Activated naive CD4-positive, alpha-beta T cell treated with anti-CD3 and anti-CD28 coated beads for 36 hours (primary cell): ENCODE measurements at regions of chr11 and their contacts with region 1.

Region 1: DNA sequence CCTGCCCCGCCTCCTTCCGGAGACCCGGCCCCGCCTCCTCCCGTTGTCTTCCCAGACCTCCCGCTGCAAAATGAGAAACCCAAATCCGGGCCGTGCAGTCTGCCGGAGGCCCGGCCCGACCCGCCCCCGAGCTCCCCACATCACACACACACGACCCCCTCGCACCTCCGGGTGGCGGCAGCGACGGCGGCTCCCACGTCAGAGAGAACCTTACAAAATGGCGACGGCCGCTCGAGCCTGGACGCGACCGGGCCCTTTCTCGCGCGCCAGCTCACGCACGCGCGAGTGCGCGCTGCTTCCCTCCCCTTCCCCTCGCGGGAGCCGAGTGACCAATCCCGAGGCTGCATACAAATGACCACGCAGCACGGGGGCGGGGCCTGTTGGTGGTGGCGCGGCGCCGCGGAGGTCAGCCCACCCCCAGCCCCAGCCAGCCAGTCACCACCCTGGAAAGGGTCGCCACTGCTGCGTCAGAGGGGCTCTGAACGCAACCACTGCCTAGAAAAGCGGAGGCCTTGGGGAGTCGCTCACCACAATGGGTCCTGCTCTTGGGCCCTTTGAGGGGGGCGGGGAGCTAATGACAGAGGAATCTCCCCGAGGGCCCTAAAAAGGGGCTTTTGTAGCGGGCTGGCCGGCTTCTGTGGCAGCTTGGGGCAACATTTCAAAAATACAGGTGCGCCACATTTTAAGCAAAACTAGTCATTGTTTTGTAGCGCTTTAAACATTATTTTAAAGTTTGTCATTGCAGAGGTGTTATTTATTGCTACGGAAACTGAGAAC is at the start of gene RBM4B:
- DNase-seq: peak; percentile 97
- H3K4me3 Mint-ChIP-seq: peak within 1 kb of the TSS; percentile 96
- H3K27ac Mint-ChIP-seq: peak within 1 kb of the TSS; percentile 97
- H3K4me1 Mint-ChIP-seq: peaks cover 27% of the 10 kb centered on the region
- H3K27me3 Mint-ChIP-seq: no peaks in the 10 kb centered on the region
- total RNA-seq, gene RBM4B: 10.9 to 11.7 TPM

Region 2: DNA sequence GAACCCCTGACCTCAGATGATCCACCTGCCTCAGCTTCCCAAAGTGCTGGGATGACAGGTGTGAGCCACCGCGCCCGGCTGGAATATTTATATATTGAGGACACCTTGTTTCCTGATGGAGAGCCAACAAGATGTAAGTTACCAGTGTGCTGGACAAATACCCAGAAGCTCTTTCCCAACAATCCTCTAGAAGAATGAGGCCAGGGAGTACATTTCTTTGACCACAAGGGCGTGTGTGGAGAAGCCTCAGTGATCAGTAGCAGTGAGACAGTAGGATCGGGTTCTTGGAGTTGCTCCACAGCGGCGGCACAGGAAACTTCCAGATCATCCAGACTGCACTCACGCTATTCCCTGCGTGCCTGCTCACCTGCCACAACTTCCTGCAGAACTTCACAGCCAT is 1426.3 kb before region 1 on chr11:
- CTCF ChIA-PET with region 1: no interaction called
- intact Hi-C with region 1: no loop called
- DNase-seq: no peak
- H3K4me3 Mint-ChIP-seq: no peak overlapping the region
- H3K27ac Mint-ChIP-seq: no peak overlapping the region
- H3K4me1 Mint-ChIP-seq: no peaks in the 10 kb centered on the region
- H3K27me3 Mint-ChIP-seq: no peaks in the 10 kb centered on the region

Region 3: GRCh38 chr11:66408488-66409214 is 269.1 kb before region 1 on chr11:
- CTCF ChIA-PET with region 1: interaction called, 9 read pairs
- intact Hi-C with region 1: loop called (anchors 1 kb)
- DNase-seq: peak; percentile 93
- H3K4me3 Mint-ChIP-seq: peak overlapping the region; percentile 68
- H3K27ac Mint-ChIP-seq: no peak overlapping the region
- H3K4me1 Mint-ChIP-seq: peaks cover 4% of the 10 kb centered on the region
- H3K27me3 Mint-ChIP-seq: peaks cover 9% of the 10 kb centered on the region

Region 4: DNA sequence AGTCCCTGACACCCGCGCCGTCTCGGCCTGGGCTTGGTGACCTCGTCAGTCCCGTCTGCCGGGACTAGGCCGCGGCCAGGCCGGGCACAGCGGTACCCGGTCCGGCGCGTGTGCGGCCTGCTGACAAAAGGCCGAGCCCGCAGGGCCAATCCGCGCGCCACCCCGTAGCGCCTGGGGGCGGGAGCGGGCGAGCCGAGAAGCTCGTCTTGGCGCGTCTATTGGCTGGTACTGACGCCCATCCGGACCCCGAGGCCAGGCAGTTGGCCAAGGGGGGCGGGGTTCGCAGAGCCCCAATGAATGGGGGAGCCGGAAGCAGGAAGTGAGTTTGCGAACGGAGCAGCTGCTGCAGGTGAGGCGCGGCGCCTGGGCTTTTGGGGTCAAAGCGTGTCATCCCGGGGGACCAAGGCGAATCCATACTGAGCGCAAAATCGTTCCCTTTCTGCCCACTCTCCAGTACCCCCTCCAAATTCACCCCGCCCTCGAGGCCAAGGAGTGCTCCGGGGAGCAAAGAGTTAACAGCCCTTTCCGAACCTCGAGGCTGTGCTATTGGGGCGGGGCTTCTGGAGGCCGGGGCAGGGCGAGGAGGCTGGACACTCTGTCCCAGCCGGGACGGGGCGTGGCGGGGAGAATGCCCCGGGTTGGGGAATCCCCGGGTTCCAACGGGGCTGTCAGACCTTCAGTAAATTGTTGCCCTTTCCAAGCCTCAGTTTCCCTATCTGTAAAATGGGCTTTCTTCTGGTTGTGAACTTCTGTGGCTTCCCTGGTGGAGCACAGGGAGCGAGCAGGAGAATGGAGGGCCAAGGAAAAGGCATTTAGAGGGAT is 197.5 kb before region 1 on chr11 and contains the start of gene DPP3:
- CTCF ChIA-PET with region 1: interaction called, 3 read pairs
- intact Hi-C with region 1: loop called (anchors 1 kb)
- DNase-seq: peak; percentile 97
- H3K4me3 Mint-ChIP-seq: peak within 1 kb of the TSS; percentile 89
- H3K27ac Mint-ChIP-seq: peak within 1 kb of the TSS; percentile 84
- H3K4me1 Mint-ChIP-seq: peaks cover 25% of the 10 kb centered on the region
- H3K27me3 Mint-ChIP-seq: no peaks in the 10 kb centered on the region
- total RNA-seq, gene DPP3: 73.8 to 80.1 TPM

Region 5: DNA sequence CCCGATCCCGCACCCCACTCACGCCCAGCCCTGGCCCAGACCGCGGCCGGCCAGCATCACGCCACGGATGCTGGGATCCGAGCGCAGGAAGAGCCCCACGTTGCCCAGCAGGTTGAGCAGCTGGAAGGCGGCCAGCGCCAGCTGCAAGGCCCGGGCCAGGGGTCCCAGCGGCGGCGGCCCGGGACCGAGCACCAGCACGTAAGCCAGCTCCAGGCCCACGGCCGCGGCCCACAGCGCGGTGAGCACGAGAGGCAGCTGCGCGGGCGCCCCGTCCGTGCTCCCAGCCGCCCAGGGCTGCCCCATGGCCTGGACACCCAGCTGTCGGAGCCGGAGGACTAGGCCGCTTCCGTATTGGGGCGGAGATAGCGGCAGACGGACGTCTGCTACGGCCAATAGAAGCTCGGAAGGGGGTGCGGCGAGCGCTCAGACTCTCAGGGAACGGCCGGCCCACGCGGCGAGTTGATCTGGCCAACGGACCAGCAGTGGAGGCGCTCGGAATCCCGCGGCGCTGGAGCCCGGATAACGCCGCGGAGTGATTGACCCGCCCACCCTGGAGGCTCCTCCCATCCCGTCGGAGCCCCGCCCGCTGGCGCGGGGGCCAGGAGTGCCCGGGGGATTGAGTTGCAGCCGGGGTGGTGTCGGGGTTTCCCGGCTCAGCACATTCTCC is 132.0 kb before region 1 on chr11 and contains the start of gene ZDHHC24:
- CTCF ChIA-PET with region 1: interaction called, 5 read pairs
- intact Hi-C with region 1: loop called (anchors 1 kb)
- DNase-seq: peak; percentile 91
- H3K4me3 Mint-ChIP-seq: peak within 1 kb of the TSS; percentile 75
- H3K27ac Mint-ChIP-seq: peak within 1 kb of the TSS; percentile 30
- H3K4me1 Mint-ChIP-seq: peaks cover 18% of the 10 kb centered on the region
- H3K27me3 Mint-ChIP-seq: no peaks in the 10 kb centered on the region
- total RNA-seq, gene ZDHHC24: 11.5 to 13.4 TPM

Region 6: GRCh38 chr11:66592457-66593302 is 85.1 kb before region 1 on chr11 and contains the starts of genes CCDC87 and CCS:
- CTCF ChIA-PET with region 1: interaction called, 8 read pairs
- intact Hi-C with region 1: loop called (anchors 1 kb)
- DNase-seq: peak; percentile 98
- H3K4me3 Mint-ChIP-seq: peak within 1 kb of the TSS; percentile 100
- H3K27ac Mint-ChIP-seq: peak within 1 kb of the TSS; percentile 98
- H3K4me1 Mint-ChIP-seq: peaks cover 30% of the 10 kb centered on the region
- H3K27me3 Mint-ChIP-seq: no peaks in the 10 kb centered on the region
- total RNA-seq, gene CCDC87: 0.07 to 0.12 TPM
- total RNA-seq, gene CCS: 22.6 to 22.8 TPM

Region 7: DNA sequence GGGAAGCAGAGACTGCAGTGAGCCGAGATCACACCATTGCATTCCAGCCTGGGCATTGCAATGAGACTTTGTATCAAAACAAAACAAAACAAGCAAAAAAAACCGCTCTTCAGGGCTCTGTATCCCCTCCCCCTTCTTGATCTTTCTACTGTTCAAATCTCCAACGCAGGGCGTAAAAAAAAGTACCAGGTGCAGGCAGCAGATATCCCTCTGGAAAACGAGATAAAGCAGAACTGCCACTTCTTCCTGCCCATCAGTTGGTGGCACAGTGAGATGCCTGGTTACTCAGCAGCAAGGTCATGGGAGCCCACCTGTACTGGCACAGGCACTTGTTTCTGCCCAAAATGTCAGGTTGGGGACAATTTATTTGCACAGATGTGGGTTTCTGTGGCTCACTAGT is 73.6 kb before region 1 on chr11:
- CTCF ChIA-PET with region 1: no interaction called
- intact Hi-C with region 1: no loop called
- DNase-seq: no peak
- H3K4me3 Mint-ChIP-seq: no peak overlapping the region
- H3K27ac Mint-ChIP-seq: no peak overlapping the region
- H3K4me1 Mint-ChIP-seq: no peaks in the 10 kb centered on the region
- H3K27me3 Mint-ChIP-seq: no peaks in the 10 kb centered on the region

Region 8: DNA sequence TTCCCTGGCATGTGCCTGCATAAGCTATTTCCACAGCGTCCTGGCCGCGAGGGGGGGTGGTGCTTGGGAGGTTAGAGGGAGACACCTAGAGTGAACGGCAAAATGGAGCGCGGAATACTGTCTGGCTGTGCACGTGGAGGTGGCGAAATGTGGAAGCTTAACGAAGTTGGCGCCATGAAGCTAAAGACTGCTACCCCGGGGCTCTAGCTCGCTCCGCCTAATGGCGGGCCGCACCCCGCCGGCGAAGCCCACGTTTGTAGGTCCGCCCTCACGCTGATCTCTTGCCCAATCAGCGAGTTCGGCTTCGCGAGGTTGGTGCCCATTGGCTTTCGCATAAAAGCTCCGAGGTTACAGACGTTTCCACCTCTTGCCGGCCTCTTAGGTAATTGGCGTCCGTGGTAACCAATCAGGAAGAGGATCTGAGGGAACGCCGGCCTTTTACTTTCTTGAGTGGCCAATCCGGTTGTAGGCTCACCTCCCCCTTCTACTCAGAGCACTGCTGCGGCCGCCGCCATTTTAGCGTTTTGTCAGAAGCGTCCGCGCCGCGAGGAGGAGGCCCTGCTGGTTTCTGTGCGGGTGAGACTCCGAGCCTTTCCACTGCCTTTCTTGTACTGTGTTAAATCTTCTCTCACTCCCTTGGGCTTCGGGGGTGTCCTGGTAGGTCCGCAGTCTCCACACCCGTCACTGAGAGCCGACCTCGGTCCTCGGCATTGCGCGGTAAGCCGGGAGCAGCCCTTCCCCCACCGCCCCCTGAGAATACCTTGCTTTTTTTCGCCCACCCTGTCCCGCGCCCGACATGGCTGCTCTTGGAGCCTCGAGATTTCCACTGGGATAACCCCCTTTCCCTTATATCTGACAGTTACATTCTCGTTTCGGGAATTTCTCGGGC is 39.4 kb before region 1 on chr11 and contains the start of gene RBM4:
- CTCF ChIA-PET with region 1: interaction called, 14 read pairs
- intact Hi-C with region 1: loop called (anchors 1 kb)
- DNase-seq: peak; percentile 99
- H3K4me3 Mint-ChIP-seq: peak within 1 kb of the TSS; percentile 95
- H3K27ac Mint-ChIP-seq: peak within 1 kb of the TSS; percentile 96
- H3K4me1 Mint-ChIP-seq: peaks cover 61% of the 10 kb centered on the region
- H3K27me3 Mint-ChIP-seq: no peaks in the 10 kb centered on the region
- total RNA-seq, gene RBM4: 85.9 to 98.1 TPM

Region 9: DNA sequence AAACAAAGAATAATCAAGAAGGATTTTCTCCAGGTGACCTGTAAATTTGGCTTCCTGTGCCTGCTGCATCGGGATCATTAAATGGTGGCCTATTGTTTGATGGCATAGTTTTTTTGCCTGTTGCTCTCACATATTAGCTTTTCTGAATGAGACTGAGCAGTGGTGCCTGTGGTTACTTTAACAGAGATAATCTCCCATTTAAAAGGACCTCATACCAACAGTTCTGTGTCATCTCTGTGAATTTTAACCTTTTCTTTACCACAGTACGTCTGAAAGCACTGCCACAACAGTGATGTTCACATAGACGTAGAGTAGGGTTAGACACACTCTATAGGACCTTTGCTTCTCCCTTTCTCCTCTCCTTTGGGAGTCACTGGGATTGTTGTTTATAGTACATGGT is 142.6 kb after region 1 on chr11:
- CTCF ChIA-PET with region 1: no interaction called
- intact Hi-C with region 1: no loop called
- DNase-seq: no peak
- H3K4me3 Mint-ChIP-seq: no peak overlapping the region
- H3K27ac Mint-ChIP-seq: no peak overlapping the region
- H3K4me1 Mint-ChIP-seq: no peaks in the 10 kb centered on the region
- H3K27me3 Mint-ChIP-seq: no peaks in the 10 kb centered on the region

Region 10: GRCh38 chr11:66835768-66836405 is 158.1 kb after region 1 on chr11:
- CTCF ChIA-PET with region 1: interaction called, 6 read pairs
- intact Hi-C with region 1: loop called (anchors 1 kb)
- DNase-seq: no peak
- H3K4me3 Mint-ChIP-seq: no peak overlapping the region
- H3K27ac Mint-ChIP-seq: peak overlapping the region; percentile 1
- H3K4me1 Mint-ChIP-seq: peaks cover 19% of the 10 kb centered on the region
- H3K27me3 Mint-ChIP-seq: no peaks in the 10 kb centered on the region